ENCODE measurements at regions of chr3 and their contacts with region 1.

Region 1: GRCh38 chr3:171187706-171188290 is 161.3 kb upstream of the SLC2A2 start:
- DNase-seq: peak; percentile 28
- ATAC-seq: no peak
- H3K4me3 Mint-ChIP-seq: no peak overlapping the region
- H3K27ac Mint-ChIP-seq: no peak overlapping the region
- H3K4me1 Mint-ChIP-seq: peaks cover 16% of the 10 kb centered on the region
- H3K27me3 Mint-ChIP-seq: no peaks in the 10 kb centered on the region

Region 2: GRCh38 chr3:170889132-170889531 is 298.7 kb before region 1 on chr3:
- CTCF ChIA-PET with region 1: no interaction called
- POLR2A ChIA-PET with region 1: no interaction called
- DNase-seq: no peak
- ATAC-seq: no peak
- H3K4me3 Mint-ChIP-seq: no peak overlapping the region
- H3K27ac Mint-ChIP-seq: no peak overlapping the region
- H3K4me1 Mint-ChIP-seq: no peaks in the 10 kb centered on the region
- H3K27me3 Mint-ChIP-seq: peaks cover 7% of the 10 kb centered on the region

Region 3: DNA sequence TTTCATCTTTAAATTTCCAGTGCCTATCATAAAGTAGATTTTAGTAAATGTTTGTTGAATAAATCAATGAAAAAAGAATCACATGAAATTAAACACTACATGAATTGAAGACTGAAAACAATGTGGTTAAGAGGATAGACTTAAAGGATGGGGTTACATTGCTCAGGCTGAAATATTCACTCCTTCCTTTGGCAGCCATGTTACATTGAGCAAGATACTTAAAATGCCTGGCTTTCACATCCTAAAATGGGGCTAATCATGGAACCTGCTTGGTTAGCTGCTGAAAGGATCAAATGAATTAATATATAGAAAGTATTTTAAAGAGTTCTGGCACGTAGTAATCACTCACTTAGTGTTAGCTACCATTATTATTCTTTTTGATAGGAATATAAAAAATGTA is 35.6 kb after region 1 on chr3:
- CTCF ChIA-PET with region 1: interaction called, 11 read pairs
- POLR2A ChIA-PET with region 1: no interaction called
- DNase-seq: no peak
- ATAC-seq: no peak
- H3K4me3 Mint-ChIP-seq: no peak overlapping the region
- H3K27ac Mint-ChIP-seq: no peak overlapping the region
- H3K4me1 Mint-ChIP-seq: peaks cover 26% of the 10 kb centered on the region
- H3K27me3 Mint-ChIP-seq: no peaks in the 10 kb centered on the region

Measured in activated CD8-positive, alpha-beta T cell treated with anti-CD3 and anti-CD28 coated beads, Interleukin-2, amount 10 ng/mL, durations not matched to agents 7 days and 5 days (primary cell).